CD4-positive, alpha-beta T cell (primary cell): ENCODE measurements at regions of chr1 and their contacts with region 1.

Region 1: GRCh38 chr1:61077676-61078541 is 4.5 kb upstream of the NFIA start:
- DNase-seq: peak; percentile 76 to 99 (median 88)
- ATAC-seq: peak; percentile 71
- H3K4me3 ChIP-seq: peak overlapping the region; percentile 57
- H3K4me3 Mint-ChIP-seq: peak overlapping the region; percentile 88
- H3K27ac ChIP-seq: peak overlapping the region; percentile 29 to 78
- H3K27ac Mint-ChIP-seq: peak overlapping the region; percentile 87
- H3K4me1 ChIP-seq: peaks cover 39% of the 10 kb centered on the region
- H3K4me1 Mint-ChIP-seq: peaks cover 50% of the 10 kb centered on the region
- H3K27me3 ChIP-seq: no peaks in the 10 kb centered on the region
- H3K27me3 Mint-ChIP-seq: no peaks in the 10 kb centered on the region
- CTCF ChIP-seq: no peak

Region 2: GRCh38 chr1:59814180-59814900 is 1263.6 kb before region 1 on chr1:
- CTCF ChIA-PET with region 1: no interaction called
- POLR2A ChIA-PET with region 1: no interaction called
- intact Hi-C with region 1: loop called in 1 of 2 experiments (anchors 10 kb)
- DNase-seq: peak; percentile 81 to 97 (median 92)
- ATAC-seq: peak; percentile 93
- H3K4me3 ChIP-seq: peak overlapping the region; percentile 82
- H3K4me3 Mint-ChIP-seq: no peak overlapping the region
- H3K27ac ChIP-seq: peak overlapping the region in 1 of 2 donors; percentile 32
- H3K27ac Mint-ChIP-seq: no peak overlapping the region
- H3K4me1 ChIP-seq: peaks cover 17% of the 10 kb centered on the region
- H3K4me1 Mint-ChIP-seq: peaks cover 5% of the 10 kb centered on the region
- H3K27me3 ChIP-seq: no peaks in the 10 kb centered on the region
- H3K27me3 Mint-ChIP-seq: peaks cover 15% of the 10 kb centered on the region
- CTCF ChIP-seq: no peak

Region 3: DNA sequence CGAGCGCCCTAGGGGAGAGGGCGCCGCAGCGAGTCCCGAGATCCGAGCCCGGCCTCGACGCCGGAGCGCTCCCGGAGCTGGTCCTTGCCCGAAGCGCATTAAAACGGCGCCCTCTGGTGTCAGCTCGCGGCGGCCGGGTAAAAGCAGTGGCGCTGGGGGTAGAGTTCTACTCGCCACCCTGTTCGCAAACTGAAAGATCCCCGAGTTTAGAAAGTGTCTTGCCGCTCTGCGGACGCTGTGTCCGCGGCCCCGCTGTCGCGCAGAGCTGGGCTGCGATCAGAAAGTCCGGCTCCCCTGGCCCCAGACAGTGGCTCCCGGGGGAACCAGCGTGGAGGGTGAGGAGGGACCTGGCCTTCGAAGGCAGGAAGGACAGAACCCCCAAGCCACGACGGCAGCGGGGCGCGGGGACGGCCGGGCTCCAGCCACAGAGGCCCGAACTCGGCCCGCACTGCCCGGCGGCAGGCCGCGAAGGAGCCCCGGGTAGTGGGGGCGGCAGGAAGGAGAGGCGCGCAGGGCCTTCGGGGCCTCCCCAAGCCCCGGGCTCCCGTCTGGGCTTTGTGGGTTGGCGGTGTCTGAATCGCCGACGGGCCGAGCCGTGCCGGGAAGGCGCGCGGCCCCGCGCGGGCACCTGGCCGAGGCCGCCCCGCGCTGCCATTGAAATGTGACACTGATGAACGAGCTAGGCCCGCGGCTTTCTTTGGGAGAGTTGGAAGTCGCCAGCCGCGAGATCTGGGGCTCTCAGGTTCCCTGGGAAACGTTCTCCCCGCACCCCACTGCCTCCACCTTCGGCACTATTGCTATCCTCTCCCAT is 34.7 kb before region 1 on chr1:
- CTCF ChIA-PET with region 1: interaction called, 3 read pairs
- POLR2A ChIA-PET with region 1: interaction called, 4 read pairs
- intact Hi-C with region 1: loop called in 1 of 2 experiments (anchors 5 kb)
- DNase-seq: peak; percentile 68 to 88 (median 78)
- ATAC-seq: peak; percentile 97
- H3K4me3 ChIP-seq: peak overlapping the region; percentile 56
- H3K4me3 Mint-ChIP-seq: peak overlapping the region; percentile 78
- H3K27ac ChIP-seq: no peak overlapping the region
- H3K27ac Mint-ChIP-seq: no peak overlapping the region
- H3K4me1 ChIP-seq: peaks cover 8% of the 10 kb centered on the region
- H3K4me1 Mint-ChIP-seq: peaks cover 5% of the 10 kb centered on the region
- H3K27me3 ChIP-seq: peaks cover 14 to 24% of the 10 kb centered on the region in 2 experiments
- H3K27me3 Mint-ChIP-seq: peaks cover 68% of the 10 kb centered on the region
- CTCF ChIP-seq: peak; percentile 89

Region 4: DNA sequence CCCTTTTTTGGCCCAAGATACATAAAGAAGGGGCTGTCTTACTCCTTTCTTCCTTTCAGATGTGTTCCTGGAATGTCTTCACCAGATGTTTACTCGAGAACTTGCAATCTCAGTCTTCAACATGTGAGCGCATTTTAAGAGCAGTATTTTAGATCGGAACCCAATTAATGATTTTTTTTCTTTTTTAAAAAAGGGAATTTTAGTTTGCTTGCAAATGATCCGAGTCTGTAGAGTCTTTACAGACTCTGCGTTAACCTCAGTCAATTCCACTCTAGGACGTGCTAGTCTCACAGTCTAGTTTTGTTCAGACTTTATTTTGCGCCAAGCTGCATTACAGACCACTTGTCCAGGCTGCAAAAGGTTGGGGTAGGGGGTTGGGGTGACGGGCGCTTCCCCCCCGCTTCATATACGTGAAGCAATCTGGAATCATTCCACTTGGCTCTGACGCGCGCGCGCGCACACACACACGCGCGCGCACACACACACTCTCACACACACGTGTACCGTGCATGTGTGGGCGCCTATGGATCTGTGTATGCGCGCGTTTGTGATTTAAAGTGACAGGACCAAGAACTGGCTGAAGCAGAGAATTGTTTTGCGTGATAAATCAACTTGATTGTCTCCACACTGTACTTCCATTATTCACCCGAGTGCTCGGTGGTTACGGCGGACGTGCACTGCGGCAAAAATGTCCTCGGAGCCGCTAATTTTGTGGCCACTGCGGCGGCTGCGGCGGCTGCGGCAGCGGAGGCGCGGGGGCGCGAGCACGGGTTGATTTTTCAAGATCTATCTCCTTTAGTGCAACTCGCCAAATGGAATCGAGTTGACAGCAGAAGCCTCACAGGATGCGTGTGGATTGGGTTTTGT is 21.1 kb before region 1 on chr1:
- CTCF ChIA-PET with region 1: interaction called, 24 read pairs
- POLR2A ChIA-PET with region 1: interaction called, 84 read pairs
- intact Hi-C with region 1: loop called in 1 of 2 experiments (anchors 1 kb)
- DNase-seq: peak in 6 of 14 experiments; percentile 39 to 73 (median 46)
- ATAC-seq: peak; percentile 73
- H3K4me3 ChIP-seq: peak overlapping the region; percentile 59
- H3K4me3 Mint-ChIP-seq: peak overlapping the region; percentile 92
- H3K27ac ChIP-seq: no peak overlapping the region
- H3K27ac Mint-ChIP-seq: peak overlapping the region; percentile 48
- H3K4me1 ChIP-seq: peaks cover 34% of the 10 kb centered on the region
- H3K4me1 Mint-ChIP-seq: peaks cover 46% of the 10 kb centered on the region
- H3K27me3 ChIP-seq: peaks cover 34 to 68% of the 10 kb centered on the region in 2 experiments
- H3K27me3 Mint-ChIP-seq: peaks cover 68% of the 10 kb centered on the region
- CTCF ChIP-seq: no peak

Region 5: GRCh38 chr1:61125263-61125662 is 47.4 kb after region 1 on chr1:
- CTCF ChIA-PET with region 1: no interaction called
- POLR2A ChIA-PET with region 1: no interaction called
- intact Hi-C with region 1: no loop called
- DNase-seq: no peak
- ATAC-seq: no peak
- H3K4me3 ChIP-seq: no peak overlapping the region
- H3K4me3 Mint-ChIP-seq: no peak overlapping the region
- H3K27ac ChIP-seq: no peak overlapping the region
- H3K27ac Mint-ChIP-seq: no peak overlapping the region
- H3K4me1 ChIP-seq: no peaks in the 10 kb centered on the region
- H3K4me1 Mint-ChIP-seq: no peaks in the 10 kb centered on the region
- H3K27me3 ChIP-seq: no peaks in the 10 kb centered on the region
- H3K27me3 Mint-ChIP-seq: no peaks in the 10 kb centered on the region
- CTCF ChIP-seq: no peak

Region 6: GRCh38 chr1:61724813-61725694 is 647.1 kb after region 1 on chr1 and contains the start of gene TM2D1:
- CTCF ChIA-PET with region 1: no interaction called
- POLR2A ChIA-PET with region 1: no interaction called
- intact Hi-C with region 1: loop called in 1 of 2 experiments (anchors 10 kb)
- DNase-seq: peak; percentile 65 to 92 (median 78)
- ATAC-seq: peak; percentile 91
- H3K4me3 ChIP-seq: peak within 1 kb of the TSS; percentile 93
- H3K4me3 Mint-ChIP-seq: peak within 1 kb of the TSS; percentile 97
- H3K27ac ChIP-seq: peak within 1 kb of the TSS; percentile 87 to 91
- H3K27ac Mint-ChIP-seq: peak within 1 kb of the TSS; percentile 97
- H3K4me1 ChIP-seq: peaks cover 17% of the 10 kb centered on the region
- H3K4me1 Mint-ChIP-seq: peaks cover 40% of the 10 kb centered on the region
- H3K27me3 ChIP-seq: no peaks in the 10 kb centered on the region
- H3K27me3 Mint-ChIP-seq: no peaks in the 10 kb centered on the region
- CTCF ChIP-seq: no peak
- total RNA-seq, gene TM2D1: 12.0 to 13.7 TPM

Region 7: DNA sequence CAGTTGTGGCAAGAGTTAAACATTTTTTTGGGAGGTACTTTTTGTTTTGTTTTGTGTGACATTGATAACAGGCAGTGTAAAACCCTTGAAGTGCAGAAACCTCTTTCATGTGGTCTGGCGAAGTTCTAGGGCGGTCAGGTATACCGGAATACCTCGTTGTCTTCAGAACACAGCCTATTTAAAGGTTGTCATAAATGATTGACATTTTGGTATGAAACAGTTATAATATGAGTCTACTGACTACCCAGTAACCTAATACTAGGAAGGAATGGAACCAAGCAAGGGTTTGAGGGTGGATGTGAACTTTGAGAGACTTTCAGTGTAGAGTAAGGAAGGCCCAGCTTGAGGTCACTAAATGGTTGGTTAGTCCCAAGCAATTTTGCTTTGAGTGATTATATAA is 704.9 kb after region 1 on chr1:
- CTCF ChIA-PET with region 1: interaction called, 3 read pairs
- POLR2A ChIA-PET with region 1: no interaction called
- intact Hi-C with region 1: loop called in 1 of 2 experiments (anchors 10 kb)
- DNase-seq: peak; percentile 27 to 93 (median 58)
- ATAC-seq: peak; percentile 98
- H3K4me3 ChIP-seq: peak overlapping the region; percentile 13
- H3K4me3 Mint-ChIP-seq: peak overlapping the region; percentile 82
- H3K27ac ChIP-seq: no peak overlapping the region
- H3K27ac Mint-ChIP-seq: peak overlapping the region; percentile 85
- H3K4me1 ChIP-seq: peaks cover 29% of the 10 kb centered on the region
- H3K4me1 Mint-ChIP-seq: peaks cover 64% of the 10 kb centered on the region
- H3K27me3 ChIP-seq: no peaks in the 10 kb centered on the region
- H3K27me3 Mint-ChIP-seq: no peaks in the 10 kb centered on the region
- CTCF ChIP-seq: no peak